Colonic mucosa (tissue), 4 donors: ENCODE measurements at regions of chr7 and their contacts with region 1.

Region 1: DNA sequence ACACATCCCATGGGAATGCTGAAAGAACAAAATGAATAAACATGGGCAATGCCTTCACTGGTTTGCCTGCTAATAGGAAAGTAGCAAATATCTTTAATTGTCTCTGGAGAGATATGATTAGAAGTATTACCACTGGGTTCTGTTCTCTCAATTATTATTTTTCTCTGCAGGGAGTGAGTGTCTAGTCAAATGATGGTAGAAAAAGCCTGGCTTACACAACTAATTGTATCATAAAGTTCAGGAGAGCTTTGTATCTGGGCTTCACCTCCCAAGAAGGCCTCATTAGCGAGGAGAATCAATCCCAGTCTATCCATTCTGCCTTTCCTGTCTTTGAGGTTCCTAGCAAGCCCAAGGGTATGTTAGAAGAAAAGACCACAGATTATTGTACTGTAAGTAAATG is at the start of gene OR2A14:
- DNase-seq: no peak
- H3K4me3 ChIP-seq: no peak within 1 kb of the TSS
- H3K27ac ChIP-seq: no peak within 1 kb of the TSS
- H3K4me1 ChIP-seq: no peaks in the 10 kb centered on the region
- H3K27me3 ChIP-seq: no peaks in the 10 kb centered on the region
- CTCF ChIP-seq: no peak
- total RNA-seq, gene OR2A14: not detected

Region 2: GRCh38 chr7:143733876-143734275 is 389.0 kb before region 1 on chr7:
- intact Hi-C with region 1: loop called (anchors 5 kb)
- DNase-seq: no peak
- H3K4me3 ChIP-seq: no peak overlapping the region
- H3K27ac ChIP-seq: no peak overlapping the region
- H3K4me1 ChIP-seq: no peaks in the 10 kb centered on the region
- H3K27me3 ChIP-seq: no peaks in the 10 kb centered on the region
- CTCF ChIP-seq: no peak